CD8-positive, alpha-beta T cell (primary cell): ENCODE measurements at regions of chr9 and their contacts with region 1.

Region 1: GRCh38 chr9:97921959-97922724 is at the start of gene TRMO:
- DNase-seq: peak; percentile 94 to 100 (median 99)
- ATAC-seq: peak; percentile 83
- H3K4me3 ChIP-seq: peak within 1 kb of the TSS; percentile 70 to 89
- H3K4me3 Mint-ChIP-seq: peak within 1 kb of the TSS; percentile 87
- H3K27ac ChIP-seq: peak within 1 kb of the TSS; percentile 97 to 100
- H3K27ac Mint-ChIP-seq: peak within 1 kb of the TSS; percentile 99
- H3K4me1 ChIP-seq: peaks cover 42% of the 10 kb centered on the region
- H3K4me1 Mint-ChIP-seq: peaks cover 52% of the 10 kb centered on the region
- H3K27me3 ChIP-seq: no peaks in the 10 kb centered on the region
- H3K27me3 Mint-ChIP-seq: no peaks in the 10 kb centered on the region
- CTCF ChIP-seq: peak; percentile 77
- total RNA-seq, gene TRMO: 45.7 to 50.6 TPM

Region 2: GRCh38 chr9:97710356-97711222 is 211.6 kb before region 1 on chr9:
- CTCF ChIA-PET with region 1: no interaction called
- POLR2A ChIA-PET with region 1: interaction called, 3 read pairs
- intact Hi-C with region 1: loop called in 1 of 2 experiments (anchors 1 kb)
- DNase-seq: peak in 8 of 9 experiments; percentile 20 to 79 (median 50)
- ATAC-seq: peak; percentile 74
- H3K4me3 ChIP-seq: no peak overlapping the region
- H3K4me3 Mint-ChIP-seq: peak overlapping the region; percentile 35
- H3K27ac ChIP-seq: no peak overlapping the region
- H3K27ac Mint-ChIP-seq: peak overlapping the region; percentile 45
- H3K4me1 ChIP-seq: peaks cover 24% of the 10 kb centered on the region
- H3K4me1 Mint-ChIP-seq: peaks cover 32% of the 10 kb centered on the region
- H3K27me3 ChIP-seq: no peaks in the 10 kb centered on the region
- H3K27me3 Mint-ChIP-seq: peaks cover 8% of the 10 kb centered on the region
- CTCF ChIP-seq: peak; percentile 96

Region 3: GRCh38 chr9:97938081-97938644 is 16.0 kb after region 1 on chr9 and contains the start of gene HEMGN:
- CTCF ChIA-PET with region 1: interaction called, 41 read pairs
- POLR2A ChIA-PET with region 1: interaction called, 4 read pairs
- intact Hi-C with region 1: loop called in 1 of 2 experiments (anchors 1 kb)
- DNase-seq: peak in 7 of 9 experiments; percentile 29 to 86 (median 55)
- ATAC-seq: peak; percentile 98
- H3K4me3 ChIP-seq: no peak within 1 kb of the TSS
- H3K4me3 Mint-ChIP-seq: peak within 1 kb of the TSS; percentile 56
- H3K27ac ChIP-seq: peak within 1 kb of the TSS; percentile 6 to 65
- H3K27ac Mint-ChIP-seq: peak within 1 kb of the TSS; percentile 92
- H3K4me1 ChIP-seq: peaks cover 39% of the 10 kb centered on the region
- H3K4me1 Mint-ChIP-seq: peaks cover 41% of the 10 kb centered on the region
- H3K27me3 ChIP-seq: no peaks in the 10 kb centered on the region
- H3K27me3 Mint-ChIP-seq: no peaks in the 10 kb centered on the region
- CTCF ChIP-seq: no peak
- total RNA-seq, gene HEMGN: 0.14 to 0.33 TPM

Region 4: DNA sequence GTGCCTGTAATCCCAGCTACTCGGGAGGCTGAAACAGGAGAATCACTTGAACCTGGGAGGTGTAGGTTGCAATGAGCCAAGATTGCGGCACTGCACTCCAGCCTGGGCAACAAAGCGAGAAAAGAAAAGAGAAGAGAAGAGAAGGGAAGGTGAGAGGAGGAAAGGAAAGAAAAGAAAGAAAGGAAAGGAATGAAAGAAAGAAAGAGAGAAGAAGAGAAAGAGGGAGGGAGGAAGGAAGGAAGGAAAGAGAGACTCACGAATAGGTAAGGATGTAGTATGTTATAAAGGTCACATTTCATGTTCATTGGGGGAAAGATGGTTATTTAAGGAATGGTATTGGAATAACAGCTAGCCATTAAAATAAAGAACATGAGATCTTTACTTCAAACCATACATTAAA is 50.6 kb after region 1 on chr9:
- CTCF ChIA-PET with region 1: interaction called, 20 read pairs
- POLR2A ChIA-PET with region 1: no interaction called
- intact Hi-C with region 1: no loop called
- DNase-seq: no peak
- ATAC-seq: no peak
- H3K4me3 ChIP-seq: no peak overlapping the region
- H3K4me3 Mint-ChIP-seq: no peak overlapping the region
- H3K27ac ChIP-seq: no peak overlapping the region
- H3K27ac Mint-ChIP-seq: peak overlapping the region; percentile 64
- H3K4me1 ChIP-seq: peaks cover 12% of the 10 kb centered on the region
- H3K4me1 Mint-ChIP-seq: peaks cover 16% of the 10 kb centered on the region
- H3K27me3 ChIP-seq: no peaks in the 10 kb centered on the region
- H3K27me3 Mint-ChIP-seq: no peaks in the 10 kb centered on the region
- CTCF ChIP-seq: no peak

Region 5: DNA sequence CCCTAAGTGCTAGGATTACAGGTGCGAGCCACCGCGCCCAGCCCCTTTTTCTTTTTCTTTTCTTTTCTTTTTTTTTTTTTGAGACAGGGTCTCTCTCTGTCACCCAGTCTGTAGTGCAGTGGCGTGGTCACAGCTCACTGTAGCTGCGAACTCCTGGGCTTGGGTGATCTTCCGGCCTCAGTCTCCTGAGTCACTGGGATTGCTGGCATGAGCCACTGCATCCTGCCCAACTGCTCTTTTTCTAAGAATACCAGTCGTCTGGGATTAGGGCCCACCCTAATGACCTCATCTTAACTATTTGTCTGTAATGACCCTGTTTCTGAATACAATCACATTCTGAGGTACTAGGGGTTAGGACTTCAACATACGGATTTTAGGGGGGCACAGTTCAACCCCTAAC is 100.3 kb after region 1 on chr9:
- CTCF ChIA-PET with region 1: interaction called, 21 read pairs
- POLR2A ChIA-PET with region 1: no interaction called
- intact Hi-C with region 1: no loop called
- DNase-seq: peak in 1 of 9 experiments; percentile 1
- ATAC-seq: no peak
- H3K4me3 ChIP-seq: no peak overlapping the region
- H3K4me3 Mint-ChIP-seq: no peak overlapping the region
- H3K27ac ChIP-seq: no peak overlapping the region
- H3K27ac Mint-ChIP-seq: no peak overlapping the region
- H3K4me1 ChIP-seq: no peaks in the 10 kb centered on the region
- H3K4me1 Mint-ChIP-seq: no peaks in the 10 kb centered on the region
- H3K27me3 ChIP-seq: no peaks in the 10 kb centered on the region
- H3K27me3 Mint-ChIP-seq: no peaks in the 10 kb centered on the region
- CTCF ChIP-seq: no peak

Region 6: DNA sequence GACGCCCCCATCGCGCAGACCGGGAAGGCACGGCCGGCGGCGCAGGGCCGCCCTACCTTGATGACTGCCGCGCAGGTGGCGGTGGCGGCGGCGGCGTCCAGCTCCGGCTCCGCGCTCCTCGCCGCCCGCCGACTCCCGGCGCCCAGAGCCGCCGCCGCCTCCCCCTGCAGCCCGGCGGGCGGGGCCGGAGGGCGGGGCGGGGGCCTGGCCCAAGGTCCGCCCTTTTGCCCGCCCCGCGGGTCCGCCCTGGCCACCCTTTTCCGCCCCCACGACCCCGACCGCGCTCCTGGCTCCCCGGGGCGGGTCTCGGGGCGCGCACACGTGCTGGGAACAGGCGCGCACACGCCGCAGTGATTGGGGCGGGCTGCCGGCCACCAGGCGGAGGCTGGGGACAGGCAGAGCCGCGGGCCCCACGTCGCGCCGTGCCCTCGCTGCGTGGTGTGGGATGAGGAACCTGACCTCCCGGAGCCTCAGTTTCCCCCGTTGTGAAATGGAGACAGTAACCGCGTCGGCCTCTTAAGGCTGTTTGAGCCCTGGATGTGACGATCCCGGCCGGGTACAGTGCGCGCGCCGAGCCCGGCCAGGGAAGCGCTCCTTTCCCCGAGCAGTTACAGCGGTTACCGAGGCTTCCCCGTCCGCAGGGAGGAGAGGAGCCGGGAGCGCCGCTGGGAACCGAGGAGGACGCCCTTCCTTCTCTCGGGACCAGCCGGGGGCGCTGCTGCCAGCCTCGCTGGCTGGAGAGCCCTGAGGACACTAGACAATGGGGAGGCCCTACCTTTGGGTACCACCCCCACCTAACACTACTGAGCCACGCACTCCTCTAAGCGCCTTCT is 270.6 kb after region 1 on chr9 and contains the start of gene CORO2A:
- CTCF ChIA-PET with region 1: interaction called, 3 read pairs
- POLR2A ChIA-PET with region 1: interaction called, 3 read pairs
- intact Hi-C with region 1: loop called in 1 of 2 experiments (anchors 10 kb)
- DNase-seq: peak; percentile 16 to 85 (median 69)
- ATAC-seq: peak; percentile 72
- H3K4me3 ChIP-seq: peak within 1 kb of the TSS; percentile 80 to 84
- H3K4me3 Mint-ChIP-seq: peak within 1 kb of the TSS; percentile 85
- H3K27ac ChIP-seq: peak within 1 kb of the TSS; percentile 39 to 42
- H3K27ac Mint-ChIP-seq: peak within 1 kb of the TSS; percentile 69
- H3K4me1 ChIP-seq: peaks cover 32% of the 10 kb centered on the region
- H3K4me1 Mint-ChIP-seq: peaks cover 40% of the 10 kb centered on the region
- H3K27me3 ChIP-seq: no peaks in the 10 kb centered on the region
- H3K27me3 Mint-ChIP-seq: no peaks in the 10 kb centered on the region
- CTCF ChIP-seq: no peak
- total RNA-seq, gene CORO2A: 6.4 to 6.7 TPM